Activated CD4-positive, alpha-beta memory T cell treated with anti-CD3 and anti-CD28 coated beads, Interleukin-2, amount 10 ng/mL, durations not matched to agents 7 days and 5 days (primary cell): ENCODE measurements at regions of chr7 and their contacts with region 1.

Region 1: DNA sequence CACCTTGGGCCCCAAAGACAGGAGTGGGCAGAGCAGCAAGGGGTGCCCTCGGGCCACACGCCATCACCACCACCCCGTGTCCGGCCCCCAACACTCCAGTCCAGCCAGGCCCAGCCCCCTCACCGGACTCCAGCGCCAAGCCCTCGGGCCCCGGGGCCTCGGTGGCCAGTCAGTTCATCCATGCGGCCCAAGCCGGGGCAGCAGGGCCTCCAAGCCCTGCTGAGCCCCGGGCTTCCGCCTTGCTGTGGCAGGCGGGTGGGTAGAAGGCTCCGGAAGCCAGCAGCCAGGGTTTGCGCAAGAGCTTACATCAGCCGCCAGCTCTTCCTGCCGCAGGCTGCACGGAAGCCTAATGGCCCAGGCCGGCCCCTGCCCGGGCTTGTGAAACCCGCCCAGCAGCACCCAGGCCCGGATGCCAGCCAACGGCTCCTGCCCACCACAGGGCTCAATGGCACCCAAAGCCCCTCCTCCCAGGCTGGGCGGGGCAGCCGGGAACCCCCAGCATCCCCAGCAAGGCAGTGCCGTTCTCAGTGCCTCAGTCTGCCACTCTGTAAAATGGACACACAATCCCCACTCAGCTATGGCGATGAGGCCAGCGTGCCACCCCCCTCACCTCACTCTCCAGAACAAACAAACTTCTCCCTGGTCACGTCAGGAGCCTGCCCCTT is 26.5 kb downstream of the TNRC18 start:
- DNase-seq: peak; percentile 96
- H3K4me3 Mint-ChIP-seq: peak overlapping the region; percentile 85
- H3K27ac Mint-ChIP-seq: peak overlapping the region; percentile 95
- H3K4me1 Mint-ChIP-seq: peaks cover 51% of the 10 kb centered on the region
- H3K27me3 Mint-ChIP-seq: no peaks in the 10 kb centered on the region

Region 2: GRCh38 chr7:5363729-5364128 is 33.4 kb before region 1 on chr7:
- CTCF ChIA-PET with region 1: interaction called, 41 read pairs
- POLR2A ChIA-PET with region 1: interaction called, 3 read pairs
- DNase-seq: peak; percentile 30
- H3K4me3 Mint-ChIP-seq: peak overlapping the region; percentile 54
- H3K27ac Mint-ChIP-seq: peak overlapping the region; percentile 65
- H3K4me1 Mint-ChIP-seq: peaks cover 28% of the 10 kb centered on the region
- H3K27me3 Mint-ChIP-seq: no peaks in the 10 kb centered on the region

Region 3: DNA sequence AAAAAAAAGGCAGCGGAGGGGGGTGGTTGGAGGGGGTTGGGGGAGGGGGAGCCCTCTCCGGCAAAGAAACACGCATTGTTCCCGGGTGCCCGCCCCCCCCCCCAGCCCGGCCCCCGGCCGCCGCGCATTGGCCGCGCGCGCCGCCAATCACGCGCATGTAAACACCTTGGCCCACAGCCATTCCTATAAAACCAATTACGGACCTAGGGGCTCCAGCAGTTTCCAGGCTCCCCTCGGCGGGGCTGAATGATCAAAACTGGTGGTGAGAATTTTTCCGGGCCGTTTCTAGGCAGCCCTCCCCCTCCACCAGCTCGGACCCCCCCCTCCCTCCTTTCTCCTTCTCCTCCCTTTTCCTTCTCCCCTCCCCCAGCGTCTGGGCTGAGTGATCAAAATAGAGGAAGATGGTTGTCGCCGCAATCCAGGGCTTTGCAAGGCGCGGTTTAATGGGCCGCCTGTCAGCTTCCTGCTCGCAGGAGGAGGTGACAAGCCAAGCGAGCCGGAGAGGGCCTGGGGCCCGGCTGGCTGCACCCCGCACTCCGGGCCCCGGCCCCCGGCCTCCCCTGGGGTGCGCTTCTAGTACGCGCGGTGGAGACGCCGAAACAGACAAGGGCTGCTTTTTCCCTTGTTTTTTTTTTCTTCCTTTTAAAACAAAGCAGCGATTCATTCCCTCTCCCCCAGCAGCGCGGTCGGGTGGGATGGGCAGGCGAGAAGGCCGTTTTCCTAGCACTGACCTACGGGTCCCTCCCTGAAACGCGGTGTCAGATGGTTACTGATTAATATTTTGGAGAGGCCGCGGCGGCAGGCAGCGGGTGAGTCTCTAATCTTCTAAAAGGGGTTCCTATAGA is 26.9 kb after region 1 on chr7:
- CTCF ChIA-PET with region 1: interaction called, 19 read pairs
- POLR2A ChIA-PET with region 1: interaction called, 31 read pairs
- DNase-seq: peak; percentile 53
- H3K4me3 Mint-ChIP-seq: peak overlapping the region; percentile 67
- H3K27ac Mint-ChIP-seq: no peak overlapping the region
- H3K4me1 Mint-ChIP-seq: peaks cover 47% of the 10 kb centered on the region
- H3K27me3 Mint-ChIP-seq: peaks cover 74% of the 10 kb centered on the region

Region 4: GRCh38 chr7:5450549-5451372 is 53.6 kb after region 1 on chr7:
- CTCF ChIA-PET with region 1: interaction called, 11 read pairs
- POLR2A ChIA-PET with region 1: interaction called, 7 read pairs
- DNase-seq: peak; percentile 27
- H3K4me3 Mint-ChIP-seq: no peak overlapping the region
- H3K27ac Mint-ChIP-seq: no peak overlapping the region
- H3K4me1 Mint-ChIP-seq: no peaks in the 10 kb centered on the region
- H3K27me3 Mint-ChIP-seq: peaks cover 1% of the 10 kb centered on the region

Region 5: GRCh38 chr7:5586279-5586962 is 189.3 kb after region 1 on chr7:
- CTCF ChIA-PET with region 1: no interaction called
- POLR2A ChIA-PET with region 1: no interaction called
- DNase-seq: no peak
- H3K4me3 Mint-ChIP-seq: no peak overlapping the region
- H3K27ac Mint-ChIP-seq: no peak overlapping the region
- H3K4me1 Mint-ChIP-seq: peaks cover 6% of the 10 kb centered on the region
- H3K27me3 Mint-ChIP-seq: peaks cover 40% of the 10 kb centered on the region

Region 6: GRCh38 chr7:5670183-5670935 is 273.2 kb after region 1 on chr7:
- CTCF ChIA-PET with region 1: no interaction called
- POLR2A ChIA-PET with region 1: no interaction called
- DNase-seq: no peak
- H3K4me3 Mint-ChIP-seq: no peak overlapping the region
- H3K27ac Mint-ChIP-seq: no peak overlapping the region
- H3K4me1 Mint-ChIP-seq: no peaks in the 10 kb centered on the region
- H3K27me3 Mint-ChIP-seq: no peaks in the 10 kb centered on the region